Common myeloid progenitor, CD34-positive (primary cell): ENCODE measurements at regions of chr11 and their contacts with region 1.

Region 1: DNA sequence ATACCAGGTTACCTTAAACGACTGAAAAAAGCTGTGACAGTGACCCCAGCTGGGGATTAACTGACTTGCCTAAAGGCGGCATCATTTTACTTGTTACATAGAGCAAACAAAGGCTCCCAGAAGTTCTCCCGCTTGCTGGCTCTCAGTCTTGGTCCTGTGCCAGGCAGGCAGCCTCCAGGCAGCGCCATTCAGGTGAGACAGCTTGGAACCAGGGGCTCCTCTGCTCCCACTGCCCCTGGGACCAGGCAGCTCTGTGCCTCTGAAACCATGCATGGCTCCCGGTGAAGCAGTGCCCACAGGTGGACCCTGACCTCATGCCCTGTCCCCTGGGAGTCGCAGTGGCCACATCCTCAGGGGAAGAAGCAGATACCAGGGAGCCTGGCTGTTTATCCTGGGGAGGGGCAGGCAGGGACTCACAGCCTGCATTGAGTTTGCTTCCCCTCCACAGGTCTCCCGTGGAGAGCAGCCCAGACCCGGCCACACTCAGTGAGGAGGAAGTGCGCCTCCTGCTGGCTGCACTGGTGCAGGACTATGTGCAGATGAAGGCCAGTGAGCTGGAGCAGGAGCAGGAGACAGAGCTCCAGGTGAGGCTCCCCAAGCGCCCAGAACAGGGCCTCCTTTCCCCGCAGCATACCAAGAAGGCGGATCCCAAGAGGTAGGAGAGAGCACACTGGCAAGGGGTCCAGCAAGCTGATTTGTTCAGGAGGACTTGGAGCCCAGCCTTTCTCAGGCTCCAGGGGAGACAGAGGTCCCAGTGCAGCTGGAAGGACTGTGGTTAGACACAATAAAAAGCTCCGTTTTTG is 15.6 kb upstream of the CYP2R1 start:
- DNase-seq: peak; percentile 67 to 81 (median 77)
- H3K4me3 ChIP-seq: no peak overlapping the region
- H3K27ac ChIP-seq: no peak overlapping the region
- H3K4me1 ChIP-seq: peaks cover 4 to 25% (median 16%) of the 10 kb centered on the region in 4 experiments
- H3K27me3 ChIP-seq: peaks cover 0 to 9% (median 2%) of the 10 kb centered on the region in 5 experiments

Region 2: DNA sequence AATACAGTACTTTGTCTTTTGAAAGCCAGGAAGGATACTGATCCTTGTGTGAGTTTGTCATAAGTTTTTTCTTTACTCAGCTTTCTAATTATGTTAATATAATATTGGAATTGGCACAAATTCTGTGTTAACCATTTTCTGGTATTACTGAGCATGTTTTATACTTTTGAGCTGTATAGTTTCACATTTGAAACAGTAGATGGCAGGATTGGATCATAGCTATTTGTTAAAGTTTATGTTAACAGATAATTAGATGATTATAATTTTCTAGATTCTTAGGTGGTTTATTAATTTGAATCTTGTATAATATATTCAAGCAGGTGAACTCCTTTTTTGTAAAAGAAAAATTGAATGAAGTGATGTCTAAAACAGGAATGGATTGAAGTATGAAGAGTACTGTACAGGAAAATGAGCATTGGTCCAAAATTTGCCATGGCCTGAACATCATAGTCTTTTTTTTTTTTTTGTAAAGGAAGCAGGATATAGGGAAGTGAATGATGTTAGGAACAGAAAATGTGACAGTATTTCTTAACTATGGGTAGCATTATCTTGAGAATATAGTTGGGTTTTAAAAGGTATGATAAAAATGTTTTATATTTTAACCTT is 117.6 kb before region 1 on chr11:
- CTCF ChIA-PET with region 1: interaction called, 158 read pairs
- POLR2A ChIA-PET with region 1: no interaction called
- DNase-seq: peak; percentile 21 to 57 (median 48)
- H3K4me3 ChIP-seq: no peak overlapping the region
- H3K27ac ChIP-seq: no peak overlapping the region
- H3K4me1 ChIP-seq: no peaks in the 10 kb centered on the region
- H3K27me3 ChIP-seq: peaks cover 0 to 12% (median 7%) of the 10 kb centered on the region in 5 experiments

Region 3: DNA sequence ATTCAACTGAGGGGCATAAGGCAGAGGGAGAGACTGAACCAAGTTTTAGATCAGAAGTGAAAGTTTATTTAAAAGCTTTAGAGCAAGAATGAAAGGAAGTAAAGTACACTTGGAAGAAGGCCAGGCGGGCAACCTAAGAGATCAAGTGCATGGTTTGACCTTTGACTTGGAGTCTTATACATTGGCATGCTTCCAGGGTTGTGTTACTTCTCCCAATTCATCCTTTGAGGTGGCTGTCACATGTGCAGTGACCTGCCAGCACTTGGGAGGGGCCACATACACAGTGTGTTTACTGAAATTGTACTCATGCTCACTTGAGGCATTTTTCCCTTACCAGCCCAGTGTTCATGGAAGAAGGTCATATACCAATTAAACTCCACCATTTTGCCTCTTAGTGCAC is 45.9 kb before region 1 on chr11:
- CTCF ChIA-PET with region 1: no interaction called
- POLR2A ChIA-PET with region 1: no interaction called
- DNase-seq: no peak
- H3K4me3 ChIP-seq: no peak overlapping the region
- H3K27ac ChIP-seq: no peak overlapping the region
- H3K4me1 ChIP-seq: no peaks in the 10 kb centered on the region
- H3K27me3 ChIP-seq: peaks cover 0 to 7% (median 0%) of the 10 kb centered on the region in 5 experiments

Region 4: GRCh38 chr11:14892036-14892567 is 15.5 kb before region 1 on chr11 and contains the start of gene CYP2R1:
- CTCF ChIA-PET with region 1: interaction called, 74 read pairs
- POLR2A ChIA-PET with region 1: interaction called, 7 read pairs
- DNase-seq: peak; percentile 93 to 95 (median 94)
- H3K4me3 ChIP-seq: peak within 1 kb of the TSS; percentile 57 to 87 (median 76)
- H3K27ac ChIP-seq: peak within 1 kb of the TSS in 1 of 2 experiments; percentile 70
- H3K4me1 ChIP-seq: peaks cover 0 to 28% (median 19%) of the 10 kb centered on the region in 4 experiments
- H3K27me3 ChIP-seq: peaks cover 0 to 3% (median 0%) of the 10 kb centered on the region in 5 experiments

Region 5: DNA sequence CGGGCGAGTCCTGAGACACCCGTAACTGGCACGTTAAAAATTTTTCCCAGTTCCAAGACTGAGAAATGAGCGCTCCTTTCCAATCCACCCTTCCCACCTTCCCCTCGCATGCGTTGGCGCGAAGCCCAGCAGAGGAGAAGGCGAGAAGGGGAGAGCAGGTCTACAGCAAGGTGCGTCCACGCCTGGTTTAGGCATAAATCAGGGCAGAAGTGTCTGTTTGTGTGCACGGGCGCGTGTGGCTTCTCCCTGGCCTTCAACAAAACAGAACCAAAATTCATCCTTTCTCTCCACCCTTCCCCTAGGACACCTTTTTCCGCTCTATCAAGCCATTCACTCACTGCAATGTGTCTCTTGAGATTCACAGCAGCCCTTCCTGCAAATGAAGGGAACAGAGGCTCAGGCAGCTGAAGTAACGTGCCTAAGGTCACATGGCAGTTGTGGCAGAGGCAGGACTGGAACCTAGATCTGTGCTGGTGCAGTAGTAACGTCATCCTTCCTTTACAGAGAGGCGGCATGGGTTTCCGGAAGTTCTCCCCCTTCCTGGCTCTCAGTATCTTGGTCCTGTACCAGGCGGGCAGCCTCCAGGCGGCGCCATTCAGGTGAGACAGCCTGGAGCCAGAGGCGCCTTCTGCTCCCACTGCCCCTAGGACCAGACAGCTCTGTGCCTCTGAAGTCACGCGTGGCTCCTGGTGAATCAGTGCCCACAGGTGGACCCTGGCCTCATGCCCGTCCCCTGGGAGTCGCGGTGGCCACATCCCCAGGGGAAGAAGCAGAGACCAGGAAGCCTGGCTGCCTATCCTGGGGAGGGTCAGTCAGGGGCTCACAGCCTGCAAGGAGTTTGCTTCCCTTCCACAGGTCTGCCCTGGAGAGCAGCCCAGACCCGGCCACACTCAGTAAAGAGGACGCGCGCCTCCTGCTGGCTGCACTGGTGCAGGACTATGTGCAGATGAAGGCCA is 166.9 kb after region 1 on chr11:
- CTCF ChIA-PET with region 1: interaction called, 61 read pairs
- POLR2A ChIA-PET with region 1: no interaction called
- DNase-seq: peak; percentile 65 to 80 (median 80)
- H3K4me3 ChIP-seq: peak overlapping the region in 2 of 7 experiments; percentile 19 to 39
- H3K27ac ChIP-seq: no peak overlapping the region
- H3K4me1 ChIP-seq: peaks cover 0 to 20% (median 20%) of the 10 kb centered on the region in 4 experiments
- H3K27me3 ChIP-seq: peaks cover 0 to 56% (median 23%) of the 10 kb centered on the region in 5 experiments

Region 6: DNA sequence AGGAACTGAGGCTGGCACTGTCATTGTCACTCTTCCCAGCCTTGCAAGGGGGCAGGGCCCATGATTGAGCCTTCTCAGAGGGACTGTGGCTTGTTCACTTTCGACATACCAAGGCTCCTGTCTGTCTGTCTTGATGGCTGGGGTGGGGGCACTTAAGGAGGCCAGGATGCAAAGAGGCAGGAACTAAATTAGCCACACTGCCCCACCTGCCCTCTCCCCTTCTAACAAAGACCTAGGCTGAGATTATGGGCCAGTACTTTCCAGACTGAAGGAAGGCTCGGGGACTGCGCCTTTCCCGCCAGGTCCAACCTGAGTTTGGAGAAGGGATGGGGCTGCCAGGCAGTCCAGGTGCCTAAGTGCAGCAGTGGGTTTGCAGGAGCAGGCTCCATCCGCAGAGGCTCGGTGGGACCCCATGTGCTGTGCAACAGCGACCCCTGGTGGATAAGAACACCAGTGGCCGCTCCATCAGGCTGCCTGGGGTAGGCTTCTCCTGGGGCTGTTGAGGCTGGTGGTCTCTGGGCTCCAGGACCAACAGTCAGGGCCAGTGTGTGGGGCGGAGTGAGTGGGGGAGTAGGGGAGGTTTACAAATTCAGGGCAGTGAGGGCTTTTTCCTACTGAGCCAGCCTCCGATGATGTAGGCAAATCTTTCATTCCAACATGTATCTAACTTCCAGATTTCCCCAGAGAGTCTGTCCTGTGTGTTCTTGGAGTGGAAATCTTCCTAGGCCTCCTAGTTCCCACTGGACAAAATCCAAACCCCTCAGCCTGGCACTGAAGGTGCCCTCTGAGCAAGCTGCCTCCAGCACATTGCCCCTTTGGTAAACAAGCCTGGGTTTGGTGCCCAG is 301.0 kb after region 1 on chr11:
- CTCF ChIA-PET with region 1: interaction called, 29 read pairs
- POLR2A ChIA-PET with region 1: no interaction called
- DNase-seq: peak; percentile 48 to 73 (median 66)
- H3K4me3 ChIP-seq: no peak overlapping the region
- H3K27ac ChIP-seq: no peak overlapping the region
- H3K4me1 ChIP-seq: no peaks in the 10 kb centered on the region
- H3K27me3 ChIP-seq: peaks cover 0 to 6% (median 3%) of the 10 kb centered on the region in 5 experiments